Activated CD4-positive, alpha-beta memory T cell treated with anti-CD3 and anti-CD28 coated beads for 36 hours (primary cell): ENCODE measurements at regions of chr6 and their contacts with region 1.

Region 1: DNA sequence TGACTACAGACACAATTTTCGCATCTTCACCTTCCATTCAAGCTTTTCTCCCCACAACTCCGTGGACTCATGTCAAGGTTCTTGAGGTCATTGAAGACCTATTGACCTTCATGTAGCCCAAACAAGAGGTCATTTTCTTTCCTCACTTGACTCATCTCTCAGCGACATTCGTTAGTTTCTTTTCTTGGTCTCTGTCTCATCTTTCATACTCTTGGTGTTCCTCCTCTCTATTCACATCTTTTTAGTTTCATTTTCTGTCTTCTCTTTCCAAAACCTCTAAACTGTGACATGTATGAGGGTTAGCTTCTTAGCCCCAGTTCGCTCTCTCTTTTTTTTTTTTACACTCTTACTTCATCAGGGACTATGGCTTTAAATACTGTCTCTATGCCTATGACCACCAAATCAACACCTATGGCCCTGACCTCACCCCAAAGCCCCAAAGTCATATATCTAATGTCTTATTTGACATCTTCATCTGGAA is 128.6 kb upstream of the BACH2 start:
- DNase-seq: peak; percentile 52
- H3K4me3 Mint-ChIP-seq: peak overlapping the region; percentile 59
- H3K27ac Mint-ChIP-seq: peak overlapping the region; percentile 95
- H3K4me1 Mint-ChIP-seq: peaks cover 38% of the 10 kb centered on the region
- H3K27me3 Mint-ChIP-seq: no peaks in the 10 kb centered on the region

Region 2: DNA sequence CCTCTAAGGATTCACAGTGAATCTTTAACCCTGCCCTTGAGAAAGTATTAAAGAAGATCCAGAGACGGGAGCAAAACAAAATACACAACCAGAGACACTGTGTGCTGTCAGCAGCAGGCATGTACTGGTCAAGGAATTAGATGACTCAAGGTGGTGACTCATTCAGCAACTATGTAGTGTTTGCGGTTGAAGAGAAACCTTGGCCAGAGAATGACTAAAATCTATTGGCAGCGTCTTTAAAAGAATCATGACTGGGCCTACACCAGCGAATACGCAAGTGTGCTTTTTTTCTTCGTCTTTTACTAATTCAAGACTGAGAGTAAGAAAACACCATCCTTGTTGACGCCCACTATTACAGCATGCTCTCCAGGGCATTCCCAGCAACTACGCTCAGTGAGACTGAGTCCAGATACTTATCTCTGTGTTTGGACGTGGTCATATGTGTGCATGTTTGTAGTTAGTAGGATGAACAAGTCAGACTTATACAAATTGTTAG is 56.1 kb before region 1 on chr6:
- CTCF ChIA-PET with region 1: no interaction called
- POLR2A ChIA-PET with region 1: no interaction called
- intact Hi-C with region 1: loop called (anchors 1 kb)
- DNase-seq: peak; percentile 63
- H3K4me3 Mint-ChIP-seq: no peak overlapping the region
- H3K27ac Mint-ChIP-seq: peak overlapping the region; percentile 35
- H3K4me1 Mint-ChIP-seq: peaks cover 20% of the 10 kb centered on the region
- H3K27me3 Mint-ChIP-seq: no peaks in the 10 kb centered on the region

Region 3: GRCh38 chr6:90413867-90414266 is 11.3 kb before region 1 on chr6:
- CTCF ChIA-PET with region 1: interaction called, 8 read pairs
- POLR2A ChIA-PET with region 1: interaction called, 66 read pairs
- intact Hi-C with region 1: loop called (anchors 1 kb)
- DNase-seq: peak; percentile 92
- H3K4me3 Mint-ChIP-seq: peak overlapping the region; percentile 64
- H3K27ac Mint-ChIP-seq: peak overlapping the region; percentile 93
- H3K4me1 Mint-ChIP-seq: peaks cover 71% of the 10 kb centered on the region
- H3K27me3 Mint-ChIP-seq: no peaks in the 10 kb centered on the region

Region 4: DNA sequence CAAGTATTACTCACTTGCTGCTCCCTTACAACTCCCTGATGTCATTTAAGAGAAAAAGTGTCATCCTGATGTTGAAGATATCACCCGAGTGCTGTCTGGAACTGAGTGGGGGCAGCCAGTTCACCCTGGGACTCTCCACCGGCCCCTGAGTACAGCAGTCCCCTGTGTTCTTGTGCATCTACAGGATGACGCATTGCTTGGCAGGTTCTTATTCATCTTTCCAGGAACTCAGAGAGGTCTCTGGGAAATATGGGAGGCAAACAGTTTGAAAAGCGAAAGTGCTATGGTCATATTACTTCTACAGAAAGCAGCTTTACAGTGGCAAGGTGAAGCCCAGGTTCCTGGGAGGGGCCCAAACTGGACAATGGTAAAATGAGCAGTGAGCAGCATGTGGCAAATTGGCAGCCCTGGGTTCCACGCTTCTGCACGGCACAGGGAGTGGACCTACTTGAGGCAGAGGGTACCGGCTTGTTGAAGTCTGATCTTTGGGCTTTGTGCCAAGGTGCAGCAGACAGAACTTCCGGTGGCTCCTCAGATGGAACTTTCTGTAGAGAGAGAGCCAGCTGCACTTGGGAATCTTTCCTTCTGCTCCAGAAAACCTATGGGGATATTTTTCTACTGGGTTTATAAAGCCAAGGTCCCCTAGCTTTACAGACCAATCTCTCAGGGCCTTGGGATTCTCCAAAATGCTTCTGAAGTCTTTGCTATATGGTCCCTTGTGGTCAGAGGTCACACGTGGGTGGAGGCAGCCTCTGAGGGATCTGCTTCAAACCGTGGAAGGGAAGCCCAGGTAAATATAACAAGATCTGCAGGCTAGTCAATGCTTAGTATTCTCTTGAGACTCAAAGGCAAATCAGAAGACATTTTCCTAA is 33.4 kb after region 1 on chr6:
- CTCF ChIA-PET with region 1: interaction called, 11 read pairs
- POLR2A ChIA-PET with region 1: interaction called, 22 read pairs
- intact Hi-C with region 1: loop called (anchors 1 kb)
- DNase-seq: peak; percentile 94
- H3K4me3 Mint-ChIP-seq: peak overlapping the region; percentile 40
- H3K27ac Mint-ChIP-seq: peak overlapping the region; percentile 95
- H3K4me1 Mint-ChIP-seq: peaks cover 87% of the 10 kb centered on the region
- H3K27me3 Mint-ChIP-seq: no peaks in the 10 kb centered on the region

Region 5: DNA sequence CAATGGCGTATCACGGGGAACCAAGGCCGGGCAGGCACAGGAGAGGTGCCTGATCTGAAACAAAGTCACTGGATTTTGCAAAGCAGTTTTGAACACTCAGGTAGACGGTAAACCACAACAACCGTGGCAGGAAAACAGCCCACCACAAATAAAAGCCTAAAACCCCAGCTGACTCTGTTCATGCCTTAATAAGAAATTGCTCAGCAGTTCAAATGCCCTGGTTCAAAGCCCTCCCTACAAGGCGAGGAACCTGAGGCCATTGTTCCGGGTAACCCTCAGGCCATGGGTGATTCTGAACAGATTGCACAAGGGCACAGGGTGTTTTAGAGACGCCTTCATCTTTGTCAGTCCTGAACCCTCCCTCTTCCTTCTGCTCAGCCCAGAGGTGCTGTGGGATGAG is 47.5 kb after region 1 on chr6:
- CTCF ChIA-PET with region 1: interaction called, 10 read pairs
- POLR2A ChIA-PET with region 1: interaction called, 14 read pairs
- intact Hi-C with region 1: loop called (anchors 1 kb)
- DNase-seq: peak; percentile 69
- H3K4me3 Mint-ChIP-seq: peak overlapping the region; percentile 54
- H3K27ac Mint-ChIP-seq: peak overlapping the region; percentile 83
- H3K4me1 Mint-ChIP-seq: peaks cover 88% of the 10 kb centered on the region
- H3K27me3 Mint-ChIP-seq: peaks cover 1% of the 10 kb centered on the region